ENCODE measurements at regions of chr2 and their contacts with region 1.

Region 1: GRCh38 chr2:46873375-46874032 is 42.1 kb downstream of the MCFD2 start:
- DNase-seq: peak; percentile 74
- ATAC-seq: peak; percentile 76
- H3K4me3 Mint-ChIP-seq: no peak overlapping the region
- H3K27ac Mint-ChIP-seq: no peak overlapping the region
- H3K4me1 Mint-ChIP-seq: peaks cover 7% of the 10 kb centered on the region
- H3K27me3 Mint-ChIP-seq: peaks cover 5% of the 10 kb centered on the region
- CTCF ChIP-seq: no peak

Region 2: GRCh38 chr2:46888491-46888890 is 15.0 kb after region 1 on chr2:
- CTCF ChIA-PET with region 1: interaction called, 10 read pairs
- POLR2A ChIA-PET with region 1: no interaction called
- intact Hi-C with region 1: no loop called
- DNase-seq: no peak
- ATAC-seq: no peak
- H3K4me3 Mint-ChIP-seq: no peak overlapping the region
- H3K27ac Mint-ChIP-seq: no peak overlapping the region
- H3K4me1 Mint-ChIP-seq: peaks cover 12% of the 10 kb centered on the region
- H3K27me3 Mint-ChIP-seq: peaks cover 3% of the 10 kb centered on the region
- CTCF ChIP-seq: no peak

Region 3: DNA sequence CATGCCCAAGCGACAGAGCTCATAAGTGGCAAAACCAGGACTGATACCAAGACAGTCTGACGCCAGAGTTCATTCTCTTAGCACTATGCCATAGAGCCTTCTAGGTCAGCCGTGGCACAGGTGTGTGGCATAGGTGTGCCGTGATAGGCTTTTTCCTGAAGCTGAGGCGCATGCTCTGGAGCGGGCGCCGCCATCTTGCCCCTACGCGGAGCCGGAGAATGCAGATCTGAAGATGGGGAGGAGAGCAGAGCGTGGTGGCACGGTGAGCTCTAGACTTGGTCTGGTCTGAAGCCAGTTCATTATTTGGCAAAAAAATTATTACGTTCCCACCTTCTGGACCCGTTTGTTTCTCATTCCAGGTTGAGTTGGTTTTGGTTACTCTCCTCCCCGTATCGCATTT is 25.5 kb after region 1 on chr2:
- CTCF ChIA-PET with region 1: no interaction called
- POLR2A ChIA-PET with region 1: no interaction called
- intact Hi-C with region 1: no loop called
- DNase-seq: no peak
- ATAC-seq: no peak
- H3K4me3 Mint-ChIP-seq: no peak overlapping the region
- H3K27ac Mint-ChIP-seq: no peak overlapping the region
- H3K4me1 Mint-ChIP-seq: peaks cover 3% of the 10 kb centered on the region
- H3K27me3 Mint-ChIP-seq: no peaks in the 10 kb centered on the region
- CTCF ChIP-seq: no peak

Region 4: GRCh38 chr2:46988733-46989481 is 115.4 kb after region 1 on chr2:
- CTCF ChIA-PET with region 1: no interaction called
- POLR2A ChIA-PET with region 1: no interaction called
- intact Hi-C with region 1: no loop called
- DNase-seq: no peak
- ATAC-seq: no peak
- H3K4me3 Mint-ChIP-seq: no peak overlapping the region
- H3K27ac Mint-ChIP-seq: no peak overlapping the region
- H3K4me1 Mint-ChIP-seq: peaks cover 32% of the 10 kb centered on the region
- H3K27me3 Mint-ChIP-seq: no peaks in the 10 kb centered on the region
- CTCF ChIP-seq: no peak

Measured in activated CD8-positive, alpha-beta T cell treated with anti-CD3 and anti-CD28 coated beads for 36 hours (primary cell).